Dendritic cell treated with granulocyte-macrophage colony-stimulating factor and Interleukin-4, amounts not matched to agents 40 ng/mL and 50 ng/mL, for 4 days (primary cell): ENCODE measurements at regions of chr2 and their contacts with region 1.

Region 1: GRCh38 chr2:16727256-16727655 is 61.6 kb upstream of the CYRIA start:
- H3K4me3 Mint-ChIP-seq: no peak overlapping the region
- H3K27ac Mint-ChIP-seq: no peak overlapping the region
- H3K4me1 Mint-ChIP-seq: peaks cover 10% of the 10 kb centered on the region
- H3K27me3 Mint-ChIP-seq: peaks cover 3% of the 10 kb centered on the region

Region 2: DNA sequence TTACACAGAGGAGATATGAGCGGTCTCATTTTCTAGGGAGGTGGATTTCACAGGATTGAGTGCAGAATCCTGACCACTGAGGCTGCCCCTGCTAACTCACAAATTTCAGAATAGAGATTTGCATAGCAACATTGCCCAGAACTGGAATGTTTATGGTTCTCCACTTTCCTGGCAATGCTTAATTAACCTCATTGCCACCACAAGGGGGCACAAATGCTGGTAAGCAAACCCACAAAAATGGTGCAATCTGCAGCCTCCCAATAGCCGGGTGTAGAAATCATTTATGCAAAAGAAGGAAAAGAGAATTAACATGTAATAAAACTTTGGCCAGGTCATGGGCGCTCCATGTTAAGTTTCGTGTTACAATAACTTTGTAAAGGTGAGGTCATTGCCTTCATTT is 174.0 kb before region 1 on chr2:
- intact Hi-C with region 1: loop called (anchors 10 kb)
- H3K4me3 Mint-ChIP-seq: no peak overlapping the region
- H3K27ac Mint-ChIP-seq: no peak overlapping the region
- H3K4me1 Mint-ChIP-seq: no peaks in the 10 kb centered on the region
- H3K27me3 Mint-ChIP-seq: no peaks in the 10 kb centered on the region

Region 3: DNA sequence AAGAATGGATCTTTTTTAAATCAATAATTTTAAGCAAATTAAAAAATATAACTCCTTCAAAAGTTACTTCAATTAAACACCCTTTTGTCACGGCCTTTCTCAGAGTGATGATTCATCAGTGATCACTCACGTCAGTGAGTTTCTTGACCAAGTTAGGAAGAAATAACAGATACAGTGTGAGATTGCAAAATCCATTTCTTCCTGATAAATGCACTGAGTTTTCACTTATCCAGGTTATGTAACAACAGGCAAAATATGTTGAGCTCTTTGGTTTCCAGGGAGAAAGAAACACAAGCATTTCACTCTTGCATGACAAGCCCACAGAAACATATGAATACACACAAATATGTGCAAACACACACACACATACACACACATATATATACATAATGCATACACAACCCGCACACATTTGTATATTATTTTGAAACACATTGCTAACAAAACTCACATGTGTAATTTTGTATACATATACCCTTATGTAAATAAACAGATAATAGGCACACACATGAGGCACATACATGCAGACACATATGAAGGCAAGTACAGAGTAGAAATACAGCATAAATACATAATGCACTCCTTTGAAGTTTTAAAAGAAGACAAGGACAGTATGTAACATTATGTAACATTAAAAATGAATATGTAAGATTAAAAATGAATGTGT is 134.4 kb after region 1 on chr2:
- intact Hi-C with region 1: no loop called
- H3K4me3 Mint-ChIP-seq: no peak overlapping the region
- H3K27ac Mint-ChIP-seq: no peak overlapping the region
- H3K4me1 Mint-ChIP-seq: peaks cover 16% of the 10 kb centered on the region
- H3K27me3 Mint-ChIP-seq: no peaks in the 10 kb centered on the region